Activated CD4-positive, alpha-beta memory T cell treated with anti-CD3 and anti-CD28 coated beads for 36 hours (primary cell): ENCODE measurements at regions of chr16 and their contacts with region 1.

Region 1: DNA sequence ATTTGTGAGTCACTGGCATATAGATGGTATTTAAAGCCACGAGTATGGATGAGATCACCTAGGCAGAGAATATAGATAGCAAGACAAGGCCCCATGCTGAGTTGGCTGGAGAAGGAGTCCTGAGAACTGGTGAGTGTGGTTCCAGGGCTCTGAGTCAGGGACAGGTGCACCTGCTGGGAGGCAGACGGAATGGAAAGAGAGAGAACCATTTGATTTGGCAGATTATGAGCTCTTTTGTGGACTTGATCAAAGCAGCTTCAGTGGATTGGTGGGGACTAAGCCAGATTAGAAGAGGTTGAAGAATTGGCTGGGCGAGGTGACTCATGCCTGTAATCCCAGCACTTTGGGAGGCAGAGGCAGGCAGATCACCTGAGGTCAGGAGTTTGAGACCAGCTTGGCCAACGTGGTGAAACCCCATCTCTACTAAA is 4.3 kb upstream of the C16orf92 start:
- DNase-seq: no peak
- H3K4me3 Mint-ChIP-seq: no peak overlapping the region
- H3K27ac Mint-ChIP-seq: no peak overlapping the region
- H3K4me1 Mint-ChIP-seq: peaks cover 4% of the 10 kb centered on the region
- H3K27me3 Mint-ChIP-seq: peaks cover 3% of the 10 kb centered on the region

Region 2: DNA sequence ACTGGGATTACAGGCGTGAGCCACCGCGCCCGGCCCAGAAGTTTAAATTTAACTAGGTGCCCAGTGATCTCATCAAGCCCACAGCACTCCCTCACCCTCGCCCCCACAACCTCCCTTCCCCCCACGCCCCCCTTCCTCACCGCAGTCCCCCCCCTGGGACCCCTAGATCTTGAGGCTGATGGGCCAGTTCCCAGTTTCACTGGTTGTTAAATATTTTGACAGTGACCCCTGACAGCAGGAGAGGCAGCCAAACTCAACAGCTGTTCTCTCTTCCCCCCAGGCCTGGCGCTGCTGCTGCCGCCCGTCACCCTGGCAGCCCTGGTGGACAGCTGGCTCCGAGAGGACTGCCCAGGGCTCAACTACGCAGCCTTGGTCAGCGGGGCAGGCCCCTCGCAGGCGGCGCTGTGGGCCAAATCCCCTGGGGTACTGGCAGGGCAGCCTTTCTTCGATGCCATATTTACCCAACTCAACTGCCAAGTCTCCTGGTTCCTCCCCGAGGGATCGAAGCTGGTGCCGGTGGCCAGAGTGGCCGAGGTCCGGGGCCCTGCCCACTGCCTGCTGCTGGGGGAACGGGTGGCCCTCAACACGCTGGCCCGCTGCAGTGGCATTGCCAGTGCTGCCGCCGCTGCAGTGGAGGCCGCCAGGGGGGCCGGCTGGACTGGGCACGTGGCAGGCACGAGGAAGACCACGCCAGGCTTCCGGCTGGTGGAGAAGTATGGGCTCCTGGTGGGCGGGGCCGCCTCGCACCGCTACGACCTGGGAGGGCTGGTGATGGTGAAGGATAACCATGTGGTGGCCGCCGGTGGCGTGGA is 324.2 kb before region 1 on chr16:
- CTCF ChIA-PET with region 1: interaction called, 6 read pairs
- POLR2A ChIA-PET with region 1: no interaction called
- intact Hi-C with region 1: loop called (anchors 2 kb)
- DNase-seq: no peak
- H3K4me3 Mint-ChIP-seq: no peak overlapping the region
- H3K27ac Mint-ChIP-seq: no peak overlapping the region
- H3K4me1 Mint-ChIP-seq: peaks cover 4% of the 10 kb centered on the region
- H3K27me3 Mint-ChIP-seq: no peaks in the 10 kb centered on the region

Region 3: GRCh38 chr16:29983420-29984136 is 35.2 kb before region 1 on chr16:
- CTCF ChIA-PET with region 1: no interaction called
- POLR2A ChIA-PET with region 1: no interaction called
- intact Hi-C with region 1: no loop called
- DNase-seq: no peak
- H3K4me3 Mint-ChIP-seq: no peak overlapping the region
- H3K27ac Mint-ChIP-seq: no peak overlapping the region
- H3K4me1 Mint-ChIP-seq: no peaks in the 10 kb centered on the region
- H3K27me3 Mint-ChIP-seq: no peaks in the 10 kb centered on the region

Region 4: DNA sequence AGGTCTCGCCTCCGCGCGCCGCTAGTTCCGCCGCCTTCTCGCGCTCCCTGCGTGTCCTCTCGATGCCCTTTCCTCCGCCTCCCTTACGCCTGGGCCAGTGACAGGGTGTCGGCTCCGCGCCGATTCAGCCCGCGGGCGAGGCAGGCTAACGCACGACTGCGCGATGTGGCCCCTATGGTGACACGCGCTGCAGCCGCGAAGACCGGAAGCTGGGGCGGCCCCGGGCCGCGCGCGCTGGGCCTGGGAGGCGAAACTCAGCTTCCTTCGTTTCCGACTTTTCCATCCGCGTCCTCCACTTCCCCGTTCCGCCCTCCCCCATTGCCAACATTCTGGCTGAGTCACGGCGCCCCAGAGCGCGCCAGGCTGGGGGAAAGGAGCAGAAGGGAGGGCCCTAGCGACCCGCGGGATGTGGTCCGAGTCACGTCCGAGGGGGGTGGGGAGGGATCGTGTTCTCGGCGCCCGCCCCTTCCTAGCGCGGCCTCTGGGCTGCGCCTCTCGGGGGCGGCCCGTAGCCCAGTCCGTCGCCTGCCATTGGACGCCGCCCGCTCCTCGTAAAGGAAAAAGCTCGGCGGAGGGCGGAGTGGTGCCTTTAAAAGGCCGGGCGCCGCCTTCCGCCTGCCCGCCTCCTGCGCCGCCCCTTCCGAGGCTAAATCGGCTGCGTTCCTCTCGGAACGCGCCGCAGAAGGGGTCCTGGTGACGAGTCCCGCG is 46.6 kb after region 1 on chr16 and contains the start of gene ALDOA:
- CTCF ChIA-PET with region 1: no interaction called
- POLR2A ChIA-PET with region 1: no interaction called
- intact Hi-C with region 1: no loop called
- DNase-seq: peak; percentile 98
- H3K4me3 Mint-ChIP-seq: peak within 1 kb of the TSS; percentile 97
- H3K27ac Mint-ChIP-seq: peak within 1 kb of the TSS; percentile 99
- H3K4me1 Mint-ChIP-seq: peaks cover 34% of the 10 kb centered on the region
- H3K27me3 Mint-ChIP-seq: no peaks in the 10 kb centered on the region
- total RNA-seq, gene ALDOA: 1,724 to 1,734 TPM

Region 5: GRCh38 chr16:30692381-30693064 is 673.8 kb after region 1 on chr16:
- CTCF ChIA-PET with region 1: no interaction called
- POLR2A ChIA-PET with region 1: no interaction called
- intact Hi-C with region 1: no loop called
- DNase-seq: no peak
- H3K4me3 Mint-ChIP-seq: no peak overlapping the region
- H3K27ac Mint-ChIP-seq: peak overlapping the region; percentile 38
- H3K4me1 Mint-ChIP-seq: peaks cover 15% of the 10 kb centered on the region
- H3K27me3 Mint-ChIP-seq: no peaks in the 10 kb centered on the region